RWPE1 (cell line): ENCODE measurements at regions of chr7 and their contacts with region 1.

Region 1: DNA sequence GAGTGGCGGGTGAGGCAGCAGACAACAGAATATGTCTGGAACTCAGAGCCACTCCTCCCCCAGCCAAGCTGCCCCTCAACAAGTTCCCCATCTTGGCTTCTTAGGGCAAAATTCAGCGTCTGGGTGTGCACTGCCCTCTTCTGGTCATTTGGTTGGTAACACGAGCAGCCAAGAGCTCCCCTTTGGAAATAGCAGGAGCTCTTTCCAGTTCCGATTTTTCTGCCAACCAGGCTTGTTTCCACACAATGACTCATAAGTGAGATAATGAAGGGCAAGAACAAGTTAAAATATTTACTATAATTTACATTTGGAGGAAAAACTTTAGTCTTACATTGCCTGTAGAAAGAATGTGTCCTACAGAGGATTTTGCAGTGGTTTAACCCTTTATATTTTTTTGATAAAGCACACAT is 70.5 kb downstream of the ADCYAP1R1 start:
- DNase-seq: peak; percentile 71
- H3K27ac ChIP-seq: no peak overlapping the region
- CTCF ChIP-seq: peak; percentile 89

Region 2: DNA sequence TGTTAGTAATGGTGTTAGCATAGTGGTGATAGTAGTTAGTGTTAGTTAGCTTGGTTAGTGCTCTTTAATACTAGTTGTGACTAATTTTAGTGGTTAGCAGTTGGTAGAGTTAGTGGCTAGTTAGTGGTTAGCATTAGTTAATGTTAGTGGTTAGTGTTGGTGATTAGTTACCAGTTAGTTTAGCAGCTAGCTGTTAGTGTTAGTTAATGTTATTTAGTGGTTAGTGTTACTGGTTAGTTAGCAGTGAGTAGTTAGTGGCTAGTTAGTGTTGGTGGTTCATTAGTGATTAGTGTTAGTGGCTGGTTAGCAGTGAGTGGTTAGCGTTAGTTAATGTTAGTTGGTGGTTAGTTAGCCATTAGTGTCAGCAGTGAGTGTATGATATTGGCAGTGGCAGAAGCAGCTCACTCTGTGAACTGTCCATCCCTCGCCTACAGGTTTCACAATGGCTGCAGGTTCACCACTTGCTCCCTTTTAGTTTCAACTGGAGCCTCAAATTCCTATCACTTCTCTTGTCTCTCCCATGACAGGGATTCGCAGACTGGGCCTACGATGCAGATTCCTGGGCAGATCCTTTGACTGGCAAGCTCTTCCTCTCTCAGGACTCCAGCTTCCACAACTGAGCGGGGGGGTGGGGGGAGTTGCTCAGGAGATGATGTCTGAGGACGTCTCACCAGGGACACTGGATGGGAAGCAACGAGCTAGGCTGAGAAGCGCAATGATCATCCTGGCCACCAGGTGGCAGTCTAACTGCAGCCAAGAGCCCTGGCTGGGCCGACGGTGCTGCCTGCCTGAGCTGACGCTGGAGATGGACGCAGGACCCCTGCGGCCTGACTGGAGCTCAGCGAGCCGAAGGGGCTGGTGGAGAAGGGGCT is 139.4 kb before region 1 on chr7:
- CTCF ChIA-PET with region 1: interaction called, 108 read pairs
- POLR2A ChIA-PET with region 1: interaction called, 3 read pairs
- DNase-seq: peak; percentile 80
- H3K27ac ChIP-seq: no peak overlapping the region
- CTCF ChIP-seq: peak; percentile 97

Region 3: GRCh38 chr7:31134246-31135188 is 11.9 kb after region 1 on chr7:
- CTCF ChIA-PET with region 1: interaction called, 25 read pairs
- POLR2A ChIA-PET with region 1: no interaction called
- DNase-seq: peak; percentile 77
- H3K27ac ChIP-seq: no peak overlapping the region
- CTCF ChIP-seq: peak; percentile 79